WTC11 (cell line): ENCODE measurements at regions of chr1 and their contacts with region 1.

Region 1: DNA sequence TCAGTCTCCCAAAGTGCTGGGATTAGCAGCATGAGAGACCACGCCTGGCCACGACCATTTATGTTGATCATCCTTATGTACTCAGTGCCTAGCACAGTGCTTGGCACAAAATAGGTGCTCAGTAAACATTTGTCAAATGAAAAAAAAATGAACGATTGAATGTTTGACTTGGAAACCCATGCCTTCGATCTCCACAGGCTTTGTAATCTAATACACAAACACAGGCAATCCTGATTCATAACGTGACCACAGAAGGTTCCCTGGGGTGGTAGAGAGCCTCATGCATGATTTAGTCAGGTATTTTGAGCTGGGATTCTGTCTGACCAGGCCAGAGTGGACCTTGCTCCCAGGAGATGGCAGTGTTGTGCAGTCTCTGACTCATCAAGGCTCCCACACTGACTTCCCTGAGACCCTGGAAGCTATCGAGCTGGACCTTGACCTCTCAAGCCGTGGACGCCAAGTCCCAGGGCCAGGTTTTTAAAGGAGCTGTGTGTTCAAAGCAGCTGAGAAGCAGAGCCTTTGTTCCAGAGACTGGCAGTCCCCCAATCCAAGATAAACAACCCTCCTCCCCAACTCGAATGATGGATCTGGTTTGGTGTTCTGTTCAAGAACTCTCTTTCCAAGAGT is 81.1 kb downstream of the PGM1 start:
- DNase-seq: peak; percentile 82
- ATAC-seq: peak; percentile 95
- H3K4me3 Mint-ChIP-seq: no peak overlapping the region
- H3K27ac Mint-ChIP-seq: peak overlapping the region; percentile 31; the same call in 1 of the 2 replicates
- H3K4me1 Mint-ChIP-seq: peaks cover 23% of the 10 kb centered on the region
- H3K27me3 Mint-ChIP-seq: no peaks in the 10 kb centered on the region
- CTCF ChIP-seq: peak; percentile 34; the same call in 1 of the 2 replicates

Region 2: DNA sequence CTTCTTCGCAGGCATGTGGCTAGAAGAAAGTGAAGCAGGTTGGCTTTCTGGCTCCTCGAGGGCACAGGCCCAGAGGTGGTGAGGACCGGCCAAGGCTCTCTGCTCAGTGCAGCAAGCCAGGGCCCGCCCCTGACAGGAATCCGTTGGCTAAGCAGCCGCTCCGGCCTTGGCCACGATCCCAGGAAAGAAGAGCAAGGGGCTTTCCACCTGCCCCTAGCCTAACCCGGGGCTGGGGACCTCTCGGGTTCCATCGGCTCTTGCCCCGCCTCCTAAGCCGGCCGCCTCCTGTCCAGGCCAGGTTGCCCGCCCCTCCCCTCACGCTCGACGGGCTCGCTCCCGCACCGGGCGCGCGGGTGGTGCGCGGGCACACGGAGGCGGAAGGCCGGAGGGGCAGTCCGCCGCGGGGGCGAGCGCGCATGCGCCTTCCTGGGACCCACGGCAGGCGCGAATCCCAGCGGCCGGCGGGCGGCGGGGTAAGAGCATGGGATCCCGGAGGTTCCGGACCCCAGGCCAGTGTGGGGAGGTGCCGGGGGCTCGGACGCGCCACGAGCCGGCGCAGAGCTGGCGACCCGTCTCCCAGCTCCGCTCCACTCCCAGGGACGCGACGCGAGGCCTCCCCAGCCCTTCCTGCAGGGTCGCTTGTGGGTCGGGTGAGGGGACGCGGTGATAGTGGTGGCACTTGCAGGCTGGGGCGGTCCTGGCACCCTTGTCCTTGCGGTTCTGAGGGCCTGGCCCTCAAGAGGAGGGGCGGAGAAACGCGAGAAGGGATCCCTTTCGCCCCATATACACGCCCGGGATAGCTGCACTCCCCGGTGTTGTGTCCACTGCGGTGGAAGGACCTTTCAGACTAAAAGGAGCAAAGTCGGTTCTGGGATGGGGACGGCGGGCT is 306.9 kb before region 1 on chr1 and contains the start of gene ALG6:
- CTCF ChIA-PET with region 1: no interaction called
- POLR2A ChIA-PET with region 1: no interaction called
- DNase-seq: peak; percentile 98
- ATAC-seq: peak; percentile 98
- H3K4me3 Mint-ChIP-seq: peak within 1 kb of the TSS; percentile 96
- H3K27ac Mint-ChIP-seq: peak within 1 kb of the TSS; percentile 87
- H3K4me1 Mint-ChIP-seq: peaks cover 24% of the 10 kb centered on the region
- H3K27me3 Mint-ChIP-seq: peaks cover 12% of the 10 kb centered on the region
- CTCF ChIP-seq: no peak
- total RNA-seq, gene ALG6: 17.6 to 25.4 TPM (median 23.7 TPM) in 3 replicates

Region 3: DNA sequence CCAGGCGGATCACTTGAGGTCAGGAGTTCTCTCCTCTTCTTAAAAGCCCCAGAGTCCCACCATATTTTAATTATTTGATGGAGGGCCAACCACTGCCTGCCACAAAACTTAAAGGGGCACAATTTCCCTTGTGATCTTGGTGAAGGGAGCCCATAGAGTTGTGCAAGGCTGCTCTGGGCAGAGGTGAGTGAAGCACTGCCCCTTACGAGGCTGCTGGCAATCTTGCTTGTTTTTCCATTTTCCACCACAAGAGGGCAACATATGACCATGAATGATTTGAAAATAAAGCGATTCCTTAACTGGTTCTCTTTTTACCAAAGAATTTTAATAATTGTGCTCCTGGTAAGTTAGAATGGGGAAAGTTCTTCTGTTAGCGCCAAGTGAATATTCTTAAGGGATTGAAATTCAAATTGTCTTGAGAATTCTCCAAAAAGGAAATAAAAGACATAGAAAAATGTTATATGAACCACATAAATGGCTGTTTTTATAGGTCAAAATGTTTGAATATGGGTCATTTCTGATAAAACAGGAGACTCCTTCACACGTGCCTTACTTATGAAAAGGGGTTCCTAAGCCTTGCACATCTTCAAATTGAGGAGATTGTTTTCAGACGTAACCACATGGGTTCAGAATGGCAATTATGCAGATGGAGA is 58.5 kb before region 1 on chr1:
- CTCF ChIA-PET with region 1: interaction called, 20 read pairs
- POLR2A ChIA-PET with region 1: no interaction called
- DNase-seq: peak; percentile 58
- ATAC-seq: peak; percentile 68
- H3K4me3 Mint-ChIP-seq: no peak overlapping the region
- H3K27ac Mint-ChIP-seq: no peak overlapping the region
- H3K4me1 Mint-ChIP-seq: peaks cover 39% of the 10 kb centered on the region
- H3K27me3 Mint-ChIP-seq: no peaks in the 10 kb centered on the region
- CTCF ChIP-seq: peak; percentile 69

Region 4: DNA sequence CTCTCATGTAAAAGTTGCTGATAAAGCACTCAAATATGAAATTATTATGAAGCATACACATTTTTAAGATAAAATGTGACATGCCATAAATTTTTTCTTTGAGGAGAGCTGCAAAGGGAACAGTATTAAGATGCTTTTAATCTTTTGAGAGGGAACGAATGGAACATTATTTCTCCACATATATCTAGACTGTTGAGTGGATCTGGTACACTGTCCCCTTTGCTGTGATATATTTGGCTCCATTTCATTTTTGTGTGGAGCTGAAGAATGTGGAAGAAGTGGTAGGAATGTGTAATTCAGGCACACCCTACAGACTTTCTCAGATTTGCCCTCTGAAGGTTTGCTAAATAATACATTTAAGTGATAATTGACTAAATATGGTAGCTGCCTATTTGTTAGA is 49.4 kb before region 1 on chr1:
- CTCF ChIA-PET with region 1: interaction called, 10 read pairs
- POLR2A ChIA-PET with region 1: no interaction called
- DNase-seq: no peak
- ATAC-seq: no peak
- H3K4me3 Mint-ChIP-seq: no peak overlapping the region
- H3K27ac Mint-ChIP-seq: no peak overlapping the region
- H3K4me1 Mint-ChIP-seq: peaks cover 36% of the 10 kb centered on the region
- H3K27me3 Mint-ChIP-seq: no peaks in the 10 kb centered on the region
- CTCF ChIP-seq: no peak

Region 5: GRCh38 chr1:63662056-63662836 is 12.1 kb before region 1 on chr1:
- CTCF ChIA-PET with region 1: interaction called, 16 read pairs
- POLR2A ChIA-PET with region 1: no interaction called
- DNase-seq: no peak
- ATAC-seq: no peak; the same call in 1 of the 2 replicates
- H3K4me3 Mint-ChIP-seq: no peak overlapping the region
- H3K27ac Mint-ChIP-seq: peak overlapping the region; percentile 72
- H3K4me1 Mint-ChIP-seq: peaks cover 35% of the 10 kb centered on the region
- H3K27me3 Mint-ChIP-seq: 0 out of 2 replicates have a peak, but pooled peaks cover 3% of the 10 kb centered on the region
- CTCF ChIP-seq: no peak

Region 6: DNA sequence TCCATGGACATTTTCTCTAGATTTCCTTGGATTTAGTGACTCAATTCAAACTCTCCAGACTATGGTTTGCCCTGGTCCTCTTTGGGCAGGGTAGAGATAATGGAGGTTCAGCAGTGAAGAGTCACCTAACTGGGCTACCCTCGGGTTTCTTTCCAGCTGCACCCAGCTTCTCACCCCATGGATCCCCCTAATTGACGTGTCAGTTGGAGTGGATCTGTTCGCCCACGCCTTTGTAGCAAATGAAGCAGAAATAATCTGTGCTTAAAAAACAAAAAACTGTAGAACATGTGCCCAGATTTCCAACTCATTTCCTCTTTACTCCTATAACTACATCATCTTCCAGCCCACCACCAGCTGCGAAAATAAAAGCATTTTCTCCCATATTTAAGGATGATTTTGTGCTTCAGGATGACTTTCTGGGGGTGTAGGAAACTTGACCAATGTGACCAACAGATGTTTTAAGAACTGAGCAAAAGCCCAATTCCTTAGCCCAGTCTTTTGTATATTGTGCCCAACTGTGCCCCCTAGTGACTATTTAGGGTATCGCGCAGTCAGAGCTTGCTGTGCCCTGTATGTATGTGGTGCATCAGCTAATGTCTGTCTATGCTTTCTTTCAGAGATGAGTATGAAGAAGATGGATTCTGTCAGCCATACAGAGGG is 462.5 kb after region 1 on chr1:
- CTCF ChIA-PET with region 1: interaction called, 28 read pairs
- POLR2A ChIA-PET with region 1: no interaction called
- DNase-seq: peak; percentile 84
- ATAC-seq: peak; percentile 92
- H3K4me3 Mint-ChIP-seq: no peak overlapping the region
- H3K27ac Mint-ChIP-seq: no peak overlapping the region
- H3K4me1 Mint-ChIP-seq: peaks cover 7% of the 10 kb centered on the region
- H3K27me3 Mint-ChIP-seq: no peaks in the 10 kb centered on the region
- CTCF ChIP-seq: peak; percentile 90

Region 7: GRCh38 chr1:64163970-64164369 is 489.6 kb after region 1 on chr1:
- CTCF ChIA-PET with region 1: interaction called, 18 read pairs
- POLR2A ChIA-PET with region 1: no interaction called
- DNase-seq: no peak
- ATAC-seq: peak; percentile 75
- H3K4me3 Mint-ChIP-seq: no peak overlapping the region
- H3K27ac Mint-ChIP-seq: 0 out of 2 replicates have a peak overlapping the region, but pooled peaks have one; percentile 1
- H3K4me1 Mint-ChIP-seq: no peaks in the 10 kb centered on the region
- H3K27me3 Mint-ChIP-seq: no peaks in the 10 kb centered on the region
- CTCF ChIP-seq: no peak

Region 8: DNA sequence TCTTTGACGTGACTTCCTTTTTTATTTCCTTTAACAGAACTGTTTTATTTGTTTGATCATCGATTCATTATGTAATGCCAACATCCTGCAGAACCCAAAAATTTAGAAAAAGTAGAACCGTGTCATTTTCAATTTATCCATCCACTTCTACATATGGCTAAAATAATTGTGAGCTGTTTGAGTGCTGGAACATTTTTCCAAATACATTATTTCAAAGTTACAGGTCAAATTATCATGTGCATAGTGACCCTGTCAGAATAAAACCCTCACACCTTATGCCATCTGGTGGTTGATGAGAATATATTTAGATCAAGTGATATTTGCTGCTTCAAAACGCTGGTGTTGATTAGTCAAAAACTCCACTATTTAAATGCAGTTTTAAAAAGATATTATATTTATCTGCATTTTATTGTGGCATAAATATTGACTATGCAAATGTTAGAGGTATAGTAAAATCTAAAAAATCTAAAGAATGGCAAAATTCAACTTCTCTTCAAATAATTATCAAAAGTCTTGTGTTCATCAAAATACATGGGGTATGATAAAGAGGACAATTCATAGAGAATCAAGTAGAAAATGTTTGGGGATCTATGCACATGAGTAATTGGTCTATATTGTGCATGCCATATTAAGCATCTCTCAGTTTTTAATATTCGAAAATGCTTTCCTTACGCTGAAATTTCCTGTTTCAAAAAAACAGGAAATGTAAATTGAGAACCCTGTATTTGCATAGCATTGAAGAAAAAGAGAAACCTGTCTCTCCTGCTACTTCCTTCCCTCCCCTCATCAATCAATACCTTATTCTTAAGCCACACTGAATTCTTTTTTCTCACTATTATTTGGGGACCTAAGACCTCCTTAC is 568.8 kb after region 1 on chr1:
- CTCF ChIA-PET with region 1: interaction called, 50 read pairs
- POLR2A ChIA-PET with region 1: no interaction called
- DNase-seq: no peak
- ATAC-seq: peak; percentile 12; the same call in 1 of the 2 replicates
- H3K4me3 Mint-ChIP-seq: peak overlapping the region; percentile 57
- H3K27ac Mint-ChIP-seq: peak overlapping the region; percentile 97
- H3K4me1 Mint-ChIP-seq: peaks cover 50% of the 10 kb centered on the region
- H3K27me3 Mint-ChIP-seq: peaks cover 3% of the 10 kb centered on the region; the same call in 1 of the 2 replicates
- CTCF ChIP-seq: no peak; the same call in 1 of the 2 replicates